ENCODE measurements at regions of chr7 and their contacts with region 1.

Region 1: GRCh38 chr7:74449809-74450397 is 3.8 kb upstream of the GTF2IRD1 start:
- DNase-seq: peak in 3 of 6 donors; percentile 25 to 73 (median 51)
- ATAC-seq: peak in 3 of 4 donors; percentile 42 to 61 (median 46)
- H3K4me3 ChIP-seq: no peak overlapping the region
- H3K27ac ChIP-seq: no peak overlapping the region
- H3K4me1 ChIP-seq: peaks cover 0 to 1% (median 0%) of the 10 kb centered on the region in 3 donors
- H3K27me3 ChIP-seq: no peaks in the 10 kb centered on the region
- CTCF ChIP-seq: peak; percentile 75 to 81 (median 79)

Region 2: GRCh38 chr7:74334030-74334429 is 115.9 kb before region 1 on chr7:
- intact Hi-C with region 1: no loop called
- DNase-seq: no peak
- ATAC-seq: peak in 1 of 4 donors; percentile 33
- H3K4me3 ChIP-seq: no peak overlapping the region
- H3K27ac ChIP-seq: no peak overlapping the region
- H3K4me1 ChIP-seq: no peaks in the 10 kb centered on the region
- H3K27me3 ChIP-seq: no peaks in the 10 kb centered on the region
- CTCF ChIP-seq: no peak

Region 3: GRCh38 chr7:74396993-74397392 is 52.9 kb before region 1 on chr7:
- intact Hi-C with region 1: no loop called
- DNase-seq: no peak
- ATAC-seq: no peak
- H3K4me3 ChIP-seq: no peak overlapping the region
- H3K27ac ChIP-seq: no peak overlapping the region
- H3K4me1 ChIP-seq: peaks cover 0 to 5% (median 3%) of the 10 kb centered on the region in 3 donors
- H3K27me3 ChIP-seq: no peaks in the 10 kb centered on the region
- CTCF ChIP-seq: no peak

Region 4: DNA sequence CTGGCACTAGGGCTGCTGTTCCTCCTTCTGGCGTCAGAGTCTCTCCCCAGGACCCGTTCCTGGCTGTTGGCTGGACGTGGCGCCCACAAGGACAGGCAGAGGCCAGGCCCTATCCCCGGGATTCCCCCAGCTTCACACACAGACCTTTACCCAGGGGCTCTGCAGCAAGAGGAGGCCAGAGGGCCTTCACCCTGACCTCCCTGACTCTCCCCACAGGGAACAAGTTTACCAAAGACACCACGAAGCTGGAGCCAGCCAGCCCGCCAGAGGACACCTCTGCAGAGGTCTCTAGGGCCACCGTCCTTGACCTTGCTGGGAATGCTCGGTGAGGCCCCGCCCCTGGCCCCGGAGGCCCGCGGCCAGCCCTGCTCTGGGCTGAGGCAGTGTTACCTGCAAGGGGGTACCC is 86.1 kb after region 1 on chr7:
- intact Hi-C with region 1: loop called in 2 of 3 experiments (anchors 10 kb)
- DNase-seq: no peak
- ATAC-seq: no peak
- H3K4me3 ChIP-seq: no peak overlapping the region
- H3K27ac ChIP-seq: no peak overlapping the region
- H3K4me1 ChIP-seq: no peaks in the 10 kb centered on the region
- H3K27me3 ChIP-seq: no peaks in the 10 kb centered on the region
- CTCF ChIP-seq: no peak

Region 5: GRCh38 chr7:74569501-74570075 is 119.7 kb after region 1 on chr7:
- intact Hi-C with region 1: loop called in 1 of 3 experiments (anchors 10 kb)
- DNase-seq: no peak
- ATAC-seq: peak in 1 of 4 donors; percentile 8
- H3K4me3 ChIP-seq: no peak overlapping the region
- H3K27ac ChIP-seq: no peak overlapping the region
- H3K4me1 ChIP-seq: no peaks in the 10 kb centered on the region
- H3K27me3 ChIP-seq: no peaks in the 10 kb centered on the region
- CTCF ChIP-seq: no peak

Region 6: DNA sequence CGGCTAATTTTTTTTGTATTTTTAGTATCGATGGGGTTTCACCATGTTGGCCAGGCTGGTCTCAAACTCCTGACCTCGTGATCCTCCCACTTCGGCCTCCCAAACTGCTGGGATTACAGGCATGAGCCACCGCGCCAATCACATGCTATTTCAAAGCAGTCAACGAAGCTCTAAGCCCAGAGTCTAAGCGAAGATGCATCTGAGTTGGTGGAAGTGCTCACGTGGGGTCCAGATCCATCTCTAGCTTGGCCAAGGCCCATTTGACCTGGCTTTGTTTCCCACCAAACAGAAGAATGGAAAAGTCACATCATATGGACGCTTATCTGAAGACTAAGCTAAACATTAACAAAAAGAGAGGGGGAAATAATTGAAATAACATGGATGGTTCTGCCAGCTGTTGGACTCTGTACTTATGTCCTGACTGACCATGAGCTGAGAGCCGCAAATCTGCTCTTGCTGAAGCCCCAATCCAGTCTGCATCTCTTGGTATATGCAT is 203.8 kb after region 1 on chr7:
- intact Hi-C with region 1: no loop called
- DNase-seq: no peak
- ATAC-seq: no peak
- H3K4me3 ChIP-seq: no peak overlapping the region
- H3K27ac ChIP-seq: peak overlapping the region in 2 of 4 donors; percentile 22 to 34
- H3K4me1 ChIP-seq: peaks cover 0 to 19% (median 3%) of the 10 kb centered on the region in 3 donors
- H3K27me3 ChIP-seq: no peaks in the 10 kb centered on the region
- CTCF ChIP-seq: no peak